Psoas muscle (tissue), 8 donors: ENCODE measurements at regions of chr14 and their contacts with region 1.

Region 1: GRCh38 chr14:95561001-95561412 is 26.2 kb downstream of the GLRX5 start:
- DNase-seq: peak; percentile 78 to 88
- ATAC-seq: peak; percentile 91 to 96 (median 95)
- H3K4me3 ChIP-seq: no peak overlapping the region
- H3K27ac ChIP-seq: no peak overlapping the region
- H3K4me1 ChIP-seq: no peaks in the 10 kb centered on the region
- H3K27me3 ChIP-seq: no peaks in the 10 kb centered on the region
- CTCF ChIP-seq: peak; percentile 94

Region 2: GRCh38 chr14:95683793-95684192 is 122.8 kb after region 1 on chr14:
- intact Hi-C with region 1: loop called (anchors 5 kb)
- DNase-seq: no peak
- ATAC-seq: peak in 2 of 4 donors; percentile 54 to 59
- H3K4me3 ChIP-seq: no peak overlapping the region
- H3K27ac ChIP-seq: no peak overlapping the region
- H3K4me1 ChIP-seq: no peaks in the 10 kb centered on the region
- H3K27me3 ChIP-seq: peaks cover 0 to 3% (median 0%) of the 10 kb centered on the region in 3 donors
- CTCF ChIP-seq: peak; percentile 52

Region 3: GRCh38 chr14:95774265-95775160 is 213.5 kb after region 1 on chr14:
- intact Hi-C with region 1: loop called (anchors 5 to 10 kb)
- DNase-seq: no peak
- ATAC-seq: no peak
- H3K4me3 ChIP-seq: no peak overlapping the region
- H3K27ac ChIP-seq: no peak overlapping the region
- H3K4me1 ChIP-seq: no peaks in the 10 kb centered on the region
- H3K27me3 ChIP-seq: no peaks in the 10 kb centered on the region
- CTCF ChIP-seq: peak; percentile 61

Region 4: DNA sequence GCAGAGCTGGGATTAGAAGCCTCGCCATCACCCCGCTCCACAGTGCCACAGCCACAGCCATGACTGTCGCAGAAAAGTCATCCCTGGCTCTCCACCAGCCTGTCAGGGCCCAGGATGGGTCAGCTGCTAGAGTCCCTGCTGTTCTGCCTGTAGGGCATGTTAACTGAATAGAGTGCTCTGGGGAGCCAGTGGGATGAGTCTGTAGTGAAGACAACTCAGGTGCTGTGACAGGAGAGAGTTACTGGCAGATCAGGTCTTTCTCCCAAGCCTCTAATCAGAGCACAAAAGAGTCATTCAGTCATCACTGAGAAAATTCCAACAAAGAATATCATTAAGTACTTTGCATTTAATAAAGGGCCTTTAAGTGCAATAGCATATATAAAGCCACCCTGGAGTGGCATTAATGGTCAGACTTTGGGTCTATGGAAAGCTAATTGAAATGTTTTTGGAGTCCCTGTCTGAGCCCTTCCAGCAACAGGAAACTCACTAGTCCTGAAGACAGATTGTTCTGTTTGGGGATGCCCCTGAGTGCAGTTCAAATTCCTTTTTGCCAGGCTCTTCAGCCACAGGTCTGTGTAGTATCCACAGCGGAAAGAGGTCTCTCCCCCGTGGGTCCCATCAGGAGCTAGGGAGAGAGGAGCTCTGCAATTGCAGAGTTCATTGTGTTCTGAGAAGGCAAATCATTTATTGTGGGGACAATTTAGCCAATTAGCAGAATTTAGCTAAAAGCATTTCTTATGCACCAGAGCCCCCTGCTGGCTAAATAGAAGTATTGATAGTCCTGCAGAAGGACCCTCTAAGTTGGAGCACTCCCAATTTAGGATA is 433.0 kb after region 1 on chr14:
- intact Hi-C with region 1: loop called in 1 of 2 experiments (anchors 2 kb)
- DNase-seq: no peak
- ATAC-seq: no peak
- H3K4me3 ChIP-seq: no peak overlapping the region
- H3K27ac ChIP-seq: no peak overlapping the region
- H3K4me1 ChIP-seq: no peaks in the 10 kb centered on the region
- H3K27me3 ChIP-seq: peaks cover 0 to 13% (median 3%) of the 10 kb centered on the region in 3 donors
- CTCF ChIP-seq: peak; percentile 58

Region 5: DNA sequence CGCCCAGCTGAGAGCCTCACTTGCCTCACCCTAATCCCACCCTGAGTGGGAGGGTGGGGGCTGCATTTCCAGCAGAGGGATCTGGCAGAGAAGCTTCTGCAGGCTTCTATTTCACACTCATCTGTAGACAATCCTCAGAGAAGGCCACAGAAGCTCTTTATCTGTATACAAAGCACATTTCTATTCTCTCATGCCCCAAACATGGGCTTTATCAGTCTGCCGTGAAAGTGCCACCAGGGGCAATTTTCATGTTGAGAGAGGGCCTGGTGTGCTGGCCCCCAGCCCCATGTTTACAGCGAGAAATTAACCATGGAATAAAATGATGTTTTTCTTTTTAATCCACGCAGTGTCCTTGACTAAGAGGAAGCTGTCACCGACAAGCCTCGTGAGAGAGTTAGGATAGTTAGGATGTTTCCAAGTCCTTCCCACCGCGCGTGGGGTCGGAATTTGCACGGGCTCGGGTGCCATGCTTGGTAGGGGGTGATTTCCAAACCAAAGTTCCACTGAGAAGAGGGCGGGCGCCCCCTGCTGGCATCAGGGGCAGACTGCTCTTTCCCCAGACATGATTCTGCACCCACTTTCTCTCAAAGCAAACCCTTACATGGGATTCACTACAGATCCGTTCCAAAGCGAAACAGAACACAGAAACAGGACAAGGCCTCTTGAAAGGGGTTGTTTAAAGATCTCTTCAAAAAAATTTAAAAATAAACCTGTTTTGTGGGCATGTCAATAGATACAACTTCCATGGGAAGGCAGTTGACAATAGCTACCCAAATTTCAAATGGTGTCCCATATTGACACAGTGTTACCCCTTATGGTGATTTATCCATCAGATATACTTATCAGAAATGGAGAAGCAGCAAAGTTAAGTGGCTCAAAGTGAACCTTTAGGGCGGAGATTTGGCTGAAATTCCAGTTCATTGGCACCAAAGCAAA is 714.4 kb after region 1 on chr14:
- intact Hi-C with region 1: loop called (anchors 2 to 5 kb)
- DNase-seq: peak; percentile 75 to 80
- ATAC-seq: peak; percentile 52 to 73 (median 66)
- H3K4me3 ChIP-seq: no peak overlapping the region
- H3K27ac ChIP-seq: no peak overlapping the region
- H3K4me1 ChIP-seq: peaks cover 5% of the 10 kb centered on the region
- H3K27me3 ChIP-seq: no peaks in the 10 kb centered on the region
- CTCF ChIP-seq: peak; percentile 82

Region 6: DNA sequence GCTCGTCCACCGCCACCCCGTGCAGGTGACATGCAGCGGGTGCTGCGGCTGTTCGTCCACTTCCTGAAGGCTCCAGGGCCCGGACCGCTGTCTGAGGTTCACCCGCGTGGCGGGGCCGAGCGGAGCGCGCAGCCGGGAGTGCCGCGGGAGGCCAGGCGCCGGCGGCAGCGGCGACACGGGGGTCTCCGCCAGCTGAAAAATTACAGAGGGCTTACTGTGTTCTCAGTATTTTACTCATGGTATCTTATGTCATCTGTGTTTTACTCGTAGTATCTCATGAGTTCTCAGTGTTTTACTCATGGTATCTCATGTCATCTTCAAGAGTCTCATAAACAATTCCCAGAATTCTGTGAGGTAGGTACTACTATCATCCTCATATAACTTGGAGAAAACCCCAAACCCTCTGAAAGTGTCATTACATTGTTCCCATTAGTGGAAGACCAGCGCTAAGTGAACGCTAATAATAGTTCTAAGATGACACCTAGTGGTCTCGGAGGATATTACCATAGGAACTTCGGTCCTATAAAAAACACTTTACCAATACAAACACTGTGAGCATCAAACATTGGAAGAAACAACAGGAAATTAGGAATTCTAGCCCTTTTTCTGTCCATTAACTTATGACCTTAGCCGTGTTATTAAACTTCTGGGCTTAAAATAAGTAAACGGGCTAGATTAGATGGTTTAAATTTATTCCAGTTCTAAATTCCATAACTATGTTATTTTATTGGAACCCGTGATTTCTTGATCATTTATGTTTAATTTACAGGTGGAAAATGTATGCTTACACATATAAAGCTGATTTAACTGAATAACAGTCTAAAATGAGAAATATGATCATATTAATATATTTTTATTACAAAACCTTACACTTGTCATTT is 863.3 kb after region 1 on chr14:
- intact Hi-C with region 1: loop called (anchors 5 to 10 kb)
- DNase-seq: no peak
- ATAC-seq: peak; percentile 68 to 90 (median 79)
- H3K4me3 ChIP-seq: peak overlapping the region; percentile 59
- H3K27ac ChIP-seq: no peak overlapping the region
- H3K4me1 ChIP-seq: no peaks in the 10 kb centered on the region
- H3K27me3 ChIP-seq: peaks cover 0 to 11% (median 0%) of the 10 kb centered on the region in 3 donors
- CTCF ChIP-seq: peak; percentile 85